ENCODE measurements at regions of chr20 and their contacts with region 1.

Region 1: GRCh38 chr20:41339507-41340326 is 904 bp upstream of the LPIN3 start:
- DNase-seq: peak; percentile 99
- H3K4me3 Mint-ChIP-seq: peak overlapping the region; percentile 80
- H3K27ac Mint-ChIP-seq: peak overlapping the region; percentile 75
- H3K4me1 Mint-ChIP-seq: peaks cover 14% of the 10 kb centered on the region
- H3K27me3 Mint-ChIP-seq: no peaks in the 10 kb centered on the region
- CTCF ChIP-seq: peak; percentile 99

Region 2: GRCh38 chr20:41136680-41137613 is 202.8 kb before region 1 on chr20 and contains the start of gene PLCG1:
- CTCF ChIA-PET with region 1: interaction called, 56 read pairs
- intact Hi-C with region 1: loop called (anchors 2 kb)
- DNase-seq: peak; percentile 96
- H3K4me3 Mint-ChIP-seq: peak within 1 kb of the TSS; percentile 78
- H3K27ac Mint-ChIP-seq: peak within 1 kb of the TSS; percentile 82
- H3K4me1 Mint-ChIP-seq: peaks cover 45% of the 10 kb centered on the region
- H3K27me3 Mint-ChIP-seq: no peaks in the 10 kb centered on the region
- CTCF ChIP-seq: no peak
- total RNA-seq, gene PLCG1: 91.1 and 127 TPM in 2 replicates

Region 3: DNA sequence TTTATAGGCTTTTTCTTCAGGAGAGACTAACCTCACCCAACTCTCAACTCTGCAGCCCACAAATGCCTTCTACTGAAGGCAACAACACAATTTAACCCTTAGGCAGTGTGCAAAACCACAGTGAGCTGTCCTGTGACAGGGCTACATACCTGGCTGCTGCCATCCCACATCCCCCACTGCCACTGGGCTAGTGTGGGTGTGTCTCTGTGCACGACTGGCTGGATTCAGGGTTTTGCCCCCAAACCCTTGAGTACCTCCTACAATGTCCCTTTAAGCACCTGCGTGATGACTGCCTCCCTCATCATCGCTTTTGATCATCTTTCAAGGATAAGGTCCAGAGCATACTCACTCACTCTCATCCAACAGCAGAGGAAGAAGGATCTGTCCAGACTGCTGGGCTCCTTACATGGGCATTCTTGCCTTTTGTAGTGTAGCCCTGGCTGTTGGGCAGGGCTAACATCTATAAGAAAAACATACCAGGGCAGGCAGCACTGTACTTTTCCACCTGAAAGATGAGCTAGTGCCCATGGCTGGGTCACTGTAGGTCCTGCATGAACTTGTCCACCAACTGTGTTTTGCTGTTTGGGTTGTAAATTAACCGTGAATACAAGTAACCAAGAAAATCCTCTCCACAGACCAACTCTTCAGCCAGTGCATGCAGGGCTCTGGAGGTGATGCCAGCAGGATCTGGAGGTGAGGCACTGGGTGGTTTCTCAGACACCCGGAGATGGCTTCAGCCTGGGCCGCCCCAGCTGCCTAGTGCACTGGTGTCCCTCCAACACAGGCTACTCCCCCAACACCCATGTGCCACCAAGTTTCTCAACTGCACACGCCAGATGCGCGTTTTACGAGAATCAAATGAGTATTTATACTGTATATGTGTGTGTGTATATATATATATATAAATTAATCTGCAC is 157.2 kb before region 1 on chr20:
- CTCF ChIA-PET with region 1: no interaction called
- intact Hi-C with region 1: no loop called
- DNase-seq: no peak
- H3K4me3 Mint-ChIP-seq: no peak overlapping the region
- H3K27ac Mint-ChIP-seq: no peak overlapping the region
- H3K4me1 Mint-ChIP-seq: no peaks in the 10 kb centered on the region
- H3K27me3 Mint-ChIP-seq: no peaks in the 10 kb centered on the region
- CTCF ChIP-seq: no peak

Region 4: DNA sequence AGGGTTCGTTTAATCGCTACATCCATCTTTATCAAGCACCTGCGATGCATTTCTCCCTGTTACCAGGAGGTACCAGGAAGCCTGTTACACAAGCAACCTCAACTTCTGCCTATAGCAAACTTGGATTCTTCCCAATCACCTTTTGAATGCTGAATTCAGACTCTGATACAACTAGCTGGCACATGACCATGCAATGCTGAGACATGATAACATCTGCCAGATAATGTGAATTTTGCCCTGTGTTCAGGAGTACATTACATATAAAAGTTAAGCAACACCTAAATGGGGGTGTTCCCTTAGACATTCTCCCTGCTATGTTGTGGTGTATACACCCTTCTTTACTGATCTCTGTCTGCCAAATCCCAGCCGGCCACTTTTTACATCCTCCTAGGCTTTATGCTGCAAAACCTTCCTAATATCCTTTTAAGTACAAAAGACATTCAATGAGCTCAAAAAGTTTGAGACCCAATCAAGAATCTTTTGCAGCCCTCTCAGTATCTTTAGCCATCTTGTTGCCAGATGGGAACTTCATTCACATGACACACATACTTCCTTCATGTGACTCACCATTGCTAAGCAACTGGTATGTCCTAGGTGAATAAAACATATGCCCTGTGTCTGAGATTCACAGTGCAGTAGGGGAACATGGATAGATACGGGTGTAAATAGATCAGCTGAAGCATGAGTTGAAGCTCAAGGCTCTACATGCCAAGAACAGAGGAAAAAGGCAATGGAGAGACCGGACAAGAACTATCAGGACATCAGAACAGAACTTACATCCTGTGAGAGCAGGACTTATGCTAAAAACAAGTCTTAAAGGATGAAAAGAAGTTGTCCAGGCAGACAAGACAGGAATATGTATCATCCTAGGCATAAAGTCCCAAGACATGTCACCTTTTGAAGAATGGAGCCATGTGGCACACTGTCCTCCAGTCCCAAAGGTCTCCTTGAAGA is 106.5 kb before region 1 on chr20:
- CTCF ChIA-PET with region 1: interaction called, 21 read pairs
- intact Hi-C with region 1: loop called (anchors 1 kb)
- DNase-seq: no peak
- H3K4me3 Mint-ChIP-seq: peak overlapping the region; percentile 35
- H3K27ac Mint-ChIP-seq: peak overlapping the region; percentile 42
- H3K4me1 Mint-ChIP-seq: peaks cover 19% of the 10 kb centered on the region
- H3K27me3 Mint-ChIP-seq: no peaks in the 10 kb centered on the region
- CTCF ChIP-seq: no peak

Region 5: GRCh38 chr20:41329435-41330342 is 10.0 kb before region 1 on chr20:
- CTCF ChIA-PET with region 1: interaction called, 15 read pairs
- intact Hi-C with region 1: no loop called
- DNase-seq: peak; percentile 41
- H3K4me3 Mint-ChIP-seq: no peak overlapping the region
- H3K27ac Mint-ChIP-seq: peak overlapping the region; percentile 20
- H3K4me1 Mint-ChIP-seq: peaks cover 18% of the 10 kb centered on the region
- H3K27me3 Mint-ChIP-seq: no peaks in the 10 kb centered on the region
- CTCF ChIP-seq: no peak

Region 6: GRCh38 chr20:41411391-41411847 is 71.7 kb after region 1 on chr20:
- CTCF ChIA-PET with region 1: interaction called, 6 read pairs
- intact Hi-C with region 1: loop called (anchors 1 kb)
- DNase-seq: no peak
- H3K4me3 Mint-ChIP-seq: no peak overlapping the region
- H3K27ac Mint-ChIP-seq: no peak overlapping the region
- H3K4me1 Mint-ChIP-seq: no peaks in the 10 kb centered on the region
- H3K27me3 Mint-ChIP-seq: no peaks in the 10 kb centered on the region
- CTCF ChIP-seq: peak; percentile 31

Region 7: GRCh38 chr20:41938353-41938752 is 598.6 kb after region 1 on chr20:
- CTCF ChIA-PET with region 1: no interaction called
- intact Hi-C with region 1: no loop called
- DNase-seq: no peak
- H3K4me3 Mint-ChIP-seq: no peak overlapping the region
- H3K27ac Mint-ChIP-seq: no peak overlapping the region
- H3K4me1 Mint-ChIP-seq: no peaks in the 10 kb centered on the region
- H3K27me3 Mint-ChIP-seq: peaks cover 22% of the 10 kb centered on the region
- CTCF ChIP-seq: no peak